ENCODE measurements at regions of chr11 and their contacts with region 1.

Region 1: GRCh38 chr11:355581-356458 is 13.5 kb upstream of the B4GALNT4 start:
- DNase-seq: peak; percentile 94
- ATAC-seq: peak; percentile 63
- H3K4me3 Mint-ChIP-seq: no peak overlapping the region
- H3K27ac Mint-ChIP-seq: peak overlapping the region; percentile 96
- H3K4me1 Mint-ChIP-seq: peaks cover 47% of the 10 kb centered on the region
- H3K27me3 Mint-ChIP-seq: no peaks in the 10 kb centered on the region

Region 2: DNA sequence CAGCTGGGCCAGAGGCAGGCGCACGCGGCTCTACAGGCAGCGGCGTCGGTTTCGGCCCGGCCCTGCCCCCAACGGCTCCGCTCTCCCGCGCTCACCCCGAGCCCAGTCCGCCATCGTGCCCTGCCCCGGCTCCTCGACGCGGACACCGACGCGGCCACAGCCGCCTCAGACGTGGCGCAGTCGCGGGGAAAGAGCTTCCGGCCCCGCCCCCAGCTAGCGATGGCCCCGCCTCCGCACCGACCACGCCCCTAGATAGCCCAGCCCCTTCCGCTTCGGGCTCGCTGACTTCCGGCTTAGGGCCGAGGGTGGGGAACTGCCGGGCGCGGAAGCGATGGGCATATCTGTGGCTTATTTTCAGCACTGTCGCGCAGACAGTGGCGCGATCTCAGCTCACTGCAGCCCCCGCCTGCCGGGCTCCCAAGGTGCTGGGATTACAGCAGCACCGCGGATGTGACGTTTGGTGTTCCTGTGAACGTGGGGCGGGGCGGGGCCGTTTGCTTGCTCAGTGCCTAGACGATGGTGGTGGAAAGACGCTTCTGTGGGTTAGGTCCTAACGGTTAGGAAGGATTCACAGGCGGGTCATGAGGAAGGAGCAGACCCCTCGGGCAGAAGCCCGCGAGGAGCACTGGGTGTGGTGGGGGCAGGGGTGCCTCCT is 148.5 kb before region 1 on chr11 and contains the starts of genes BET1L and RIC8A:
- CTCF ChIA-PET with region 1: interaction called, 7 read pairs
- POLR2A ChIA-PET with region 1: interaction called, 5 read pairs
- intact Hi-C with region 1: loop called in 1 of 2 experiments (anchors 1 kb)
- DNase-seq: peak; percentile 99
- ATAC-seq: peak; percentile 89
- H3K4me3 Mint-ChIP-seq: peak within 1 kb of the TSS; percentile 94
- H3K27ac Mint-ChIP-seq: peak within 1 kb of the TSS; percentile 99
- H3K4me1 Mint-ChIP-seq: peaks cover 56% of the 10 kb centered on the region
- H3K27me3 Mint-ChIP-seq: no peaks in the 10 kb centered on the region
- total RNA-seq, gene BET1L: 45.5 to 49.4 TPM
- total RNA-seq, gene RIC8A: 104 to 124 TPM

Region 3: DNA sequence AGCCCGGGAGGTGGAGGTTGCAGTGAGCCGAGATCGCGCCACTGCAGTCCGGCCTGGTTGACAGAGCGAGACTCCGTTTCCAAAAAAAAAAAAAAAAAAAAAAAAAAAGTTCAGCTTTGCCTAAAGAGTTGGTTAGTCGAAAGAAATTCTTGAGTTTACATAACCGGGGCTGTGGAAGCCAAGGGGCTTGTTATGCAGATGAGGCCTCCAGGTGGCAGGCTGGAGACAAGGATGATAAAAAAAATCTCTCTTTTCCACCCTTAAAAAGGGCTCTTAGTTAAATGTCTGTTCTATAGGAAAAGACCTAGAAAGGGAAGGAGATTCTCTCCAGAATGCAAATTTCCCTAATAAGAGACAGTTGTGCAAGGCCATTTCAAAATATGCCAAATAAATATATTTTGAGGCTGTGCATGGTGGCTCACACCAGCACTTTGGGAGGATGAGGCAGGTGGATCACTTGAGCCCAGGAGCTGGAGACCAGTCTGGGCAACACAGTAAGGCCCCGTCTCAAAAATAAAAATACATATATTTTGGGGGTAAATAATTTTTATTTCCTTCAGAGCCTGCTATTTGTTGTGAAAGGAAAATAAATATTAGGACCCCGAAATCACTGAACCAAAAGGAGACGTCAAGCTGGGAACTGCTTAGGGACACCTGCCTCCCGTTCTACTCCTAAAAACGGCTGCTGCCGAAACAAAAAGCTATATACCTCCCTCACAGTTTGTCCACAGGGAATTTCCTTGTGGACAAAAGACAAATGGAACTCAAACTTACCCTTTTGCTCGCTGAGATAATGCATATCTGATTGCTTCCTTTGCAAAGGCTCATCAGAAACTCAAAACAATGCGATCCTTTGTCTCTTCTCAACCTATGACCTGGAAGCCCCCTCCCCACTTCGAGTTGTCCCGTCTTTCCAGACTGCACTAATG is 50.6 kb before region 1 on chr11:
- CTCF ChIA-PET with region 1: interaction called, 12 read pairs
- POLR2A ChIA-PET with region 1: no interaction called
- intact Hi-C with region 1: loop called in 1 of 2 experiments (anchors 1 kb)
- DNase-seq: peak; percentile 79
- ATAC-seq: no peak
- H3K4me3 Mint-ChIP-seq: no peak overlapping the region
- H3K27ac Mint-ChIP-seq: peak overlapping the region; percentile 1
- H3K4me1 Mint-ChIP-seq: peaks cover 20% of the 10 kb centered on the region
- H3K27me3 Mint-ChIP-seq: no peaks in the 10 kb centered on the region

Region 4: DNA sequence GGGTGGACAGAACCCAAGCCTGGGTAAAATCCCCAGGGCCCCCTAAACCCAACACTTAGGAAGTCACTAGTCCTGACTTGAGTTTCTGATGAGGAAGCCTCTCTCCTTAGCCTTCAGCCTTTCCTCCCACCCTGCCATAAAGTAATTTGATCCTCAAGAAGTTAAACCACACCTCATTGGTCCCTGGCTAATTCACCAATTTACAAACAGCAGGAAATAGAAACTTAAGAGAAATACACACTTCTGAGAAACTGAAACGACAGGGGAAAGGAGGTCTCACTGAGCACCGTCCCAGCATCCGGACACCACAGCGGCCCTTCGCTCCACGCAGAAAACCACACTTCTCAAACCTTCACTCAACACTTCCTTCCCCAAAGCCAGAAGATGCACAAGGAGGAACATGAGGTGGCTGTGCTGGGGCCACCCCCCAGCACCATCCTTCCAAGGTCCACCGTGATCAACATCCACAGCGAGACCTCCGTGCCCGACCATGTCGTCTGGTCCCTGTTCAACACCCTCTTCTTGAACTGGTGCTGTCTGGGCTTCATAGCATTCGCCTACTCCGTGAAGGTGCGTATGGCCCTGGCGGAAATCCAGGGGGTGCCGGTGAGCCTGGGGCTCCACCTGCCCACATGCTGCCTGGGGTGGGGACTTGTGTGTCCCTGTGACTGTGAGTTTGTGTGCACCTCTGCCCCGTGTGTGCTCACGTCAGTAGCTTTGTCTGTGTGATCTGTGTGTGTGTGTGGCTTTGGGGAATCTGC is 41.9 kb before region 1 on chr11 and contains the start of gene IFITM1:
- CTCF ChIA-PET with region 1: interaction called, 16 read pairs
- POLR2A ChIA-PET with region 1: interaction called, 6 read pairs
- intact Hi-C with region 1: loop called (anchors 1 kb)
- DNase-seq: peak; percentile 78
- ATAC-seq: peak; percentile 40
- H3K4me3 Mint-ChIP-seq: peak within 1 kb of the TSS; percentile 95
- H3K27ac Mint-ChIP-seq: peak within 1 kb of the TSS; percentile 99
- H3K4me1 Mint-ChIP-seq: peaks cover 29% of the 10 kb centered on the region
- H3K27me3 Mint-ChIP-seq: no peaks in the 10 kb centered on the region
- total RNA-seq, gene IFITM1: 248 to 285 TPM

Region 5: GRCh38 chr11:326842-327580 is 28.8 kb before region 1 on chr11:
- CTCF ChIA-PET with region 1: interaction called, 10 read pairs
- POLR2A ChIA-PET with region 1: interaction called, 3 read pairs
- intact Hi-C with region 1: no loop called
- DNase-seq: peak; percentile 86
- ATAC-seq: peak; percentile 59
- H3K4me3 Mint-ChIP-seq: peak overlapping the region; percentile 36
- H3K27ac Mint-ChIP-seq: peak overlapping the region; percentile 93
- H3K4me1 Mint-ChIP-seq: peaks cover 66% of the 10 kb centered on the region
- H3K27me3 Mint-ChIP-seq: no peaks in the 10 kb centered on the region

Region 6: GRCh38 chr11:416757-417621 is 61.2 kb after region 1 on chr11:
- CTCF ChIA-PET with region 1: no interaction called
- POLR2A ChIA-PET with region 1: no interaction called
- intact Hi-C with region 1: no loop called
- DNase-seq: peak; percentile 60
- ATAC-seq: peak; percentile 20
- H3K4me3 Mint-ChIP-seq: peak overlapping the region; percentile 85
- H3K27ac Mint-ChIP-seq: no peak overlapping the region
- H3K4me1 Mint-ChIP-seq: peaks cover 32% of the 10 kb centered on the region
- H3K27me3 Mint-ChIP-seq: no peaks in the 10 kb centered on the region